ENCODE measurements at regions of chr1 and their contacts with region 1.

Region 1: GRCh38 chr1:23634842-23635651 is 56.6 kb upstream of the RPL11 start:
- DNase-seq: no peak
- ATAC-seq: peak; percentile 90
- H3K4me3 ChIP-seq: peak overlapping the region; percentile 42
- H3K27ac ChIP-seq: peak overlapping the region; percentile 59
- H3K4me1 ChIP-seq: peaks cover 12% of the 10 kb centered on the region
- H3K27me3 ChIP-seq: no peaks in the 10 kb centered on the region
- CTCF ChIP-seq: peak; percentile 89

Region 2: GRCh38 chr1:23539698-23540266 is 95.3 kb before region 1 on chr1:
- intact Hi-C with region 1: loop called (anchors 5 kb)
- DNase-seq: peak; percentile 90
- ATAC-seq: peak; percentile 97
- H3K4me3 ChIP-seq: peak overlapping the region; percentile 9
- H3K27ac ChIP-seq: no peak overlapping the region
- H3K4me1 ChIP-seq: peaks cover 8% of the 10 kb centered on the region
- H3K27me3 ChIP-seq: no peaks in the 10 kb centered on the region
- CTCF ChIP-seq: peak; percentile 94

Region 3: DNA sequence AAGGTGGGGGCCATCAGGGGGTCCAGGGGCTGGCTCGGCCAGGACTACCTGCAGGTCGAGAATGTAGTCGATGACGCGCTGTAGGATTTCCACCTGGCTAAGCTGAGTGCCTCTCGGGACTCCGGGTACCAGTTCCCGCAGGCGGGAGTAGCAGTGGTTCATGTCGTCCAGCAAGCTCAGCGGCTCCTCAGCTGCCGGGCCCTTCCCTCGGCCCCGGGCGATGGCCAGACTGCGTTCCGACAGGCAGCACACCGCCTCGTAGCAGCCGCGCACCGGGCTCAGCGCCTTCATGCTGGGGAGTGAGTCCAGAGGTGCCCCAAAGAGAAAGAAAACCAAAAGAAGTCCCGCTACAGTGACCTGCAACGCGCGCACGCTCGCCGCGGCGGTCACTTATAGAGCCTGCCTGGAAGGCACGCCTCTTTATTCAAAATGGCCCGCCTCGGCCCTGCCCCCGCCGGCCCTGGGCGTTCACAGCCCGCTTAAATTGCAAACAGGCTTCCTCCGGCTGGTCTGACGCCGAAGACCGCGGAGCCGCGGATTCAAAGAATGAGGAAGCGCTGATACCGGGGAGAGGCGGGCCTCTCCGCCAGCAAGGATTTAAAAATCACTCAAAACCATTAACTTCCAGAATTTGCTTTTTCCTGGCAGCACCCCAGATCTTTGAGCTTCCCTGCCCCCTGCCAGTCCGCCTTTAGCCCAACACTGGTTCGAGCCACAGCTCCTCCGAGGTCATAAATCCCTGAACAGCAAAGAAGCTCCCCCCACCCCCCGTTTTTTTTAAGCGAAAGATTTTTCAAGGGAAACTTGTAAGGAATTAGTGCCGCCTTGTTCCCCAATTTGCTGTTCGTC is 75.7 kb before region 1 on chr1 and contains the start of gene ID3:
- intact Hi-C with region 1: loop called (anchors 5 kb)
- DNase-seq: peak; percentile 99
- ATAC-seq: peak; percentile 79
- H3K4me3 ChIP-seq: peak within 1 kb of the TSS; percentile 76
- H3K27ac ChIP-seq: peak within 1 kb of the TSS; percentile 94
- H3K4me1 ChIP-seq: peaks cover 61% of the 10 kb centered on the region
- H3K27me3 ChIP-seq: no peaks in the 10 kb centered on the region
- CTCF ChIP-seq: no peak
- total RNA-seq, gene ID3: 242 TPM